ENCODE measurements at regions of chr9 and their contacts with region 1.

Region 1: GRCh38 chr9:133459476-133460404 is at the start of gene CACFD1:
- DNase-seq: peak; percentile 96 to 97
- ATAC-seq: peak; percentile 93 to 96 (median 95)
- H3K4me3 ChIP-seq: peak within 1 kb of the TSS; percentile 45 to 94 (median 86)
- H3K27ac ChIP-seq: peak within 1 kb of the TSS; percentile 68 to 97 (median 92)
- H3K4me1 ChIP-seq: peaks cover 4 to 19% (median 16%) of the 10 kb centered on the region in 9 donors
- H3K27me3 ChIP-seq: no peaks in the 10 kb centered on the region
- CTCF ChIP-seq: no peak
- total RNA-seq, gene CACFD1: 8.8 to 12.6 (median 10.8) TPM

Region 2: DNA sequence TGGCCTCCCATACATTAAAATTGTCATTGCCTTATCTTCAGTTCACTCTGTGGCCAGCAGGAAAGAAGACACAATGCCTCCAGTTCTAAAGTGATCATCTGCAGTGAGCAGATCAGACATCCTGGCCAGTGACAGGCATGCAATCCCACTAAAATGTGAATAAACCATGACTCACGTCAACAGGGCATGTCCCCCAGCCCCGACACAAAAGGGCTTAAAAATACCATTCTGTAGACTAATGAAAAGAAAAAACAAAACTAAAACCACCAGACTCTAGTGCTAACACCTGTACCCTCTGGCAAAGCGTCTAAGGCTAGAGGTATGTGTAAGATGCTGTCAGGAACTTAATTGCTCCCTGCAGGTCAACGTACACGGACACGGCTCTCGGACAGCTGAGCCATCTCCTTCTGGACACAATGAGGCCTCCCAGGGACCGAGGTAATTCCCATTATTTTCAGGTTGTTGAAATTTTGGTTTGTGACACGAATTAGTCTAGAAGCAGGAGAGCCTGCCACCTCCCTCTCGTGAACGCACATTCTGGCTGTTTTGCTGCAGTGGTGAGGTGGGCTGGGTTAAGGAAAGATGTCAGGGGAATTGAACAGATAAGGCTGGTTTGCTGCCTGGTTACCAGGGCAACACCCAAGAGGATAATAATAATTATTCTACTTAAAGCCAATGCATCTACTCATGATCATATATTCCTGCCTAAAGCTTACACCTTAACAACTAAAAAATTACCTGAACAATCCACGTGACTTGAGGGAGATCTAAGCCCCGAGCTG is 828.2 kb before region 1 on chr9:
- intact Hi-C with region 1: no loop called
- DNase-seq: no peak
- ATAC-seq: no peak
- H3K4me3 ChIP-seq: no peak overlapping the region
- H3K27ac ChIP-seq: no peak overlapping the region
- H3K4me1 ChIP-seq: no peaks in the 10 kb centered on the region
- H3K27me3 ChIP-seq: no peaks in the 10 kb centered on the region
- CTCF ChIP-seq: no peak

Region 3: DNA sequence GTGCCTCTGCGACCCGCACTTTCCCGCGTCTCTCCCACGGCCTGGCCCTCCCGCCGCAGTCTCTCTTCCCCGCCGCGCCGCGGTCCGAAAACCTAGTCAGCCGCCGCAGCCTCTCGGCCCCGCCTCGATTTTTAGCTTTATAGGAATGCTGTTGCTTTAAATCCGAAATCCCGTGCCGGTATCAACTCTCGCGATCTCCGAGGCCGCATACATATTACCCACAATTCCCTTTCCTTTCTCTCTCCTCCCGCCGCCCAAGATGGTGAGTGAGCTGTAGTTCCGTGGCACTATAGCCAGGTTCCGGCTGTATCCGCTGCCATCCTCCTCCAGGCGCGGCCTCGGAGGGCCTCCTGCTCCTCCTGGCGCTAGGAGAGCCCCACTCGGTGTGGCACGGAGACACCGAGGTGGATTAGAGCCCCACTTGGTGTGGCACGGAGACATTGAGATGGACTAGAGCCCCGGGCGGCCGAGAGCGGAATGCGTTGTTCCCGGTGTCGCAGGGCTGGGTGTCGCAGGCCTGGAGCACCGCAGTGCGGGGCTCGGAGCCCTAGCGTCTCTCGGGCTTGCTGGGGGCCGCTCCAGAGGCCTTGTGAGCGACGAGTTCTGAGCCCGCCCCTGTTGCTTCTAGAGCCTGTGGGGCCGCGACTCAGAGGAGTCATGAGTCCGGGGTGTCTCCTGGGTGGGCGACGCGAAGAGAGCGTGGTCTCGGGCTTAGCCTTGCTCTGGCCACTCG is 111.6 kb before region 1 on chr9 and contains the starts of genes MED22 and RPL7A:
- intact Hi-C with region 1: loop called in 1 of 10 experiments (anchors 5 kb)
- DNase-seq: peak; percentile 91 to 96
- ATAC-seq: peak; percentile 85 to 95 (median 92)
- H3K4me3 ChIP-seq: peak within 1 kb of the TSS; percentile 71 to 100 (median 96)
- H3K27ac ChIP-seq: peak within 1 kb of the TSS; percentile 52 to 99 (median 90)
- H3K4me1 ChIP-seq: peaks cover 5 to 34% (median 30%) of the 10 kb centered on the region in 9 donors
- H3K27me3 ChIP-seq: no peaks in the 10 kb centered on the region
- CTCF ChIP-seq: peak in 2 of 9 donors; percentile 9 to 19
- total RNA-seq, gene MED22: 11.9 to 21.1 (median 17.4) TPM
- total RNA-seq, gene RPL7A: 859 to 1,268 (median 927) TPM

Region 4: DNA sequence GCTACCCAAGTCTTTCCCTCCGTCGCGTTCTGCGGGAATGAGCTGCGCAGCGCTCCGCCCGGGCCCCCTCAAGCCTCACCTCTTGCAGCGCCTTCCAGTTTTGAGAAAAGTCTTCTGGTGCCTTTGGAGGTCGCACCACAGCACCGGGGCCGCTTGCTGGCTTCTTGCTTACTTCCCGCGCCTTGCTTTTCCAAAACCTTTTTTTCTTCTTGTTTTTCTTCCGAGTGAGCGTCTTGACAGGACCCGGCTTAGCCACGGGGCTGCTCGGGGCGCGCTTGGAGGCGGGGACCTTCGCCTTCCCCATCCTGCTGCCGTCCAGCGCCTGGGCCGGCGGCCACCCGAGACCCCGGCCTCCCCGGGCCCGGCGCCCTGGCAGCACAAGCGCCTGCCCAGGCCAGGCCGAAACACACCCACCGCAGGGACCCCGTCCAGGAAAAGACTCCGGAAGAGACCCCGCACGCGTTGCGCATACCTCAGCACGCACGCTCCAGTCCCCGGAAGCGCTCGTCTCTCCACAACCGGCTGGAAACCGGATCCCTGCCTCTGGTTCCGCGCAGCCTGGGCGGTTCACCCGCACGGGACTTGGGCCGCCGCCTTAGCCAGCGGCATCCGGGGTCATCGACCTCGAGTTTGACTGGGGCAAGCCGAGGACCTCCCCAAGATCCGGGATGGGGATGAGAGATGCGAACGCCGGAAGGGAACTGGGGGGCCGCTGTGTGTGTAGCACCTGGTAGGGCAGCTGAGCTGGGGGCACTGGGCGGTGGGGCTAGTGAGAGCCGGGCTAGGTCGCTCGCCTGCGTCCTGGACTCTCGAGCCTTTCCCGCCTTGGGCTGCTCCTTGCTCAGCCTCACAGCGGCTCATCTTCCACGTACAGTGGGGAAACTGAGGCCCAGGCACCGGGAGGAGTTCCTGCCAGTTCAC is 41.9 kb before region 1 on chr9 and contains the start of gene REXO4:
- intact Hi-C with region 1: loop called in 1 of 10 experiments (anchors 5 kb)
- DNase-seq: peak; percentile 77 to 83
- ATAC-seq: peak; percentile 92 to 97 (median 96)
- H3K4me3 ChIP-seq: peak within 1 kb of the TSS; percentile 51 to 94 (median 82)
- H3K27ac ChIP-seq: peak within 1 kb of the TSS; percentile 35 to 93 (median 82)
- H3K4me1 ChIP-seq: peaks cover 6 to 35% (median 19%) of the 10 kb centered on the region in 9 donors
- H3K27me3 ChIP-seq: no peaks in the 10 kb centered on the region
- CTCF ChIP-seq: no peak
- total RNA-seq, gene REXO4: 9.3 to 20.8 (median 10.9) TPM

Region 5: GRCh38 chr9:133478851-133479711 is 19.3 kb after region 1 on chr9 and contains the start of gene SLC2A6:
- intact Hi-C with region 1: loop called in 1 of 10 experiments (anchors 1 kb)
- DNase-seq: peak; percentile 80 to 88
- ATAC-seq: peak; percentile 95 to 98 (median 98)
- H3K4me3 ChIP-seq: peak within 1 kb of the TSS; percentile 53 to 77 (median 65)
- H3K27ac ChIP-seq: peak within 1 kb of the TSS; percentile 33 to 90 (median 85)
- H3K4me1 ChIP-seq: peaks cover 7 to 55% (median 18%) of the 10 kb centered on the region in 9 donors
- H3K27me3 ChIP-seq: peaks cover 0 to 7% (median 0%) of the 10 kb centered on the region in 7 donors
- CTCF ChIP-seq: no peak
- total RNA-seq, gene SLC2A6: 1.3 to 7.0 (median 2.2) TPM